ENCODE measurements at regions of chr6 and their contacts with region 1.

Region 1: DNA sequence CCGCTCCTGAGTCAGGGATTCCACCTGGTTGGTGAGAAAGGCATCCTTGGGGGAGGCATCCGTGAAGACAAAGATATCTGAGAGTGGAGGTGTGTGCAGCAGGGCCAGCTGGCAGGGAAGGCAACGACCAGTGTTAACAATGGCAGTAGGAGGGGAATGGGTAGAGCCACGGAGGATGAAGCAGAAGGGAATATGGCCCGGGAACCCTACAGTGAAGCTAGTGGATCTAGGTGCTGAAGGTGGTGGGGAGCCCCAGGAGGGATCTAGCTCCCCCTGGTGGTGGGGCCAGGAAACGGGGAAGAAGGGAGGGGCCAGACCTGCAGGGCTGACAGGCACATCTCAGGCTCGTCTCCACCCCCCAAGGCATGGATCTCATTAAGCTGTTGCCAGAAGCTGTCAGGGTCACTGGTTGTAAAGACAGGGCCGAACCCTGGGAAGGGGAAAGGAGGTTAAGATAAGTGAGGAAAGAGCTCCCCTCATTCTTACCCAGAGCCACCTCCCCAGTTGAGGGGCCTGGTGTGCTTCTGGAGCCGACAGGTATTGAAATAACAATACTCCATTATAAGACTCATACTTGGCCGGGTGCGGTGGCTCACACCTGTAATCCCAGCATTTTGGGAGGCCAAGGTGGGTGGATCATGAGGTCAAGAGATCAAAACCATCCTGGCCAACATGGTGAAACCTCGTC is 7.3 kb downstream of the VWA7 start:
- DNase-seq: no peak
- H3K4me3 ChIP-seq: no peak overlapping the region
- H3K27ac ChIP-seq: no peak overlapping the region
- H3K4me1 ChIP-seq: peaks cover 0 to 23% (median 3%) of the 10 kb centered on the region in 3 donors
- H3K27me3 ChIP-seq: no peaks in the 10 kb centered on the region
- CTCF ChIP-seq: peak; percentile 70 to 94 (median 90)
- POLR2A ChIP-seq: no peak

Region 2: GRCh38 chr6:31438677-31439076 is 331.2 kb before region 1 on chr6:
- intact Hi-C with region 1: no loop called
- DNase-seq: no peak
- H3K4me3 ChIP-seq: no peak overlapping the region
- H3K27ac ChIP-seq: no peak overlapping the region
- H3K4me1 ChIP-seq: peaks cover 0 to 7% (median 0%) of the 10 kb centered on the region in 3 donors
- H3K27me3 ChIP-seq: peaks cover 0 to 30% (median 0%) of the 10 kb centered on the region in 4 donors
- CTCF ChIP-seq: no peak
- POLR2A ChIP-seq: no peak

Region 3: GRCh38 chr6:31680840-31681671 is 88.8 kb before region 1 on chr6 and contains the start of gene LY6G5C:
- intact Hi-C with region 1: loop called (anchors 5 kb)
- DNase-seq: peak; percentile 33
- H3K4me3 ChIP-seq: peak within 1 kb of the TSS; percentile 43 to 69 (median 62)
- H3K27ac ChIP-seq: peak within 1 kb of the TSS; percentile 65 to 85 (median 74)
- H3K4me1 ChIP-seq: peaks cover 4 to 36% (median 16%) of the 10 kb centered on the region in 3 donors
- H3K27me3 ChIP-seq: no peaks in the 10 kb centered on the region
- CTCF ChIP-seq: peak; percentile 38 to 85 (median 73)
- POLR2A ChIP-seq: peak in 1 of 4 donors; percentile 21
- total RNA-seq, gene LY6G5C: 0.57 to 0.83 TPM in 2 of 4 donors, not detected in the others

Region 4: DNA sequence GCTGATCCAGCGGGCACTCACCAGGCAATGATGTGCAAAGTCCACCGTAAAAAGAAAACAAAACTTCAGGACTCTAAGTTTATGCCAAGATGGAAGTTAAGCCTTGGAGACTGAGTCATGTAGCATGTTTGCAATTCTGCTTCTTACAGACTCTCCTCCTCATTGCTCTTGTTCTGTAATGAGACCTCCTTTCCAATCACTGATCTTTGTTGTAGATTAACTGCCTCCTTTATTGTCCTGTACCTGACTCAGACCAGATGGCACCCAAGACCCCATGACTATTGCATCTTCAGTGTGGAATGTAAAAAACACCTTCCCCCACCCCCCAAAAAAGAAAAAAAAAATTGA is 81.6 kb after region 1 on chr6:
- intact Hi-C with region 1: no loop called
- DNase-seq: no peak
- H3K4me3 ChIP-seq: no peak overlapping the region
- H3K27ac ChIP-seq: no peak overlapping the region
- H3K4me1 ChIP-seq: no peaks in the 10 kb centered on the region
- H3K27me3 ChIP-seq: no peaks in the 10 kb centered on the region
- CTCF ChIP-seq: no peak
- POLR2A ChIP-seq: no peak

Region 5: GRCh38 chr6:31897612-31898382 is 128.0 kb after region 1 on chr6 and contains the start of gene EHMT2:
- intact Hi-C with region 1: no loop called
- DNase-seq: no peak
- H3K4me3 ChIP-seq: peak within 1 kb of the TSS; percentile 79 to 98 (median 96)
- H3K27ac ChIP-seq: peak within 1 kb of the TSS; percentile 81 to 98 (median 86)
- H3K4me1 ChIP-seq: peaks cover 25 to 55% (median 25%) of the 10 kb centered on the region in 3 donors
- H3K27me3 ChIP-seq: no peaks in the 10 kb centered on the region
- CTCF ChIP-seq: peak in 4 of 6 experiments; percentile 11 to 48 (median 35)
- POLR2A ChIP-seq: peak in 3 of 4 donors; percentile 17 to 67 (median 67)
- total RNA-seq, gene EHMT2: 23.4 to 34.5 (median 27.4) TPM